ENCODE measurements at regions of chr4 and their contacts with region 1.

Region 1: DNA sequence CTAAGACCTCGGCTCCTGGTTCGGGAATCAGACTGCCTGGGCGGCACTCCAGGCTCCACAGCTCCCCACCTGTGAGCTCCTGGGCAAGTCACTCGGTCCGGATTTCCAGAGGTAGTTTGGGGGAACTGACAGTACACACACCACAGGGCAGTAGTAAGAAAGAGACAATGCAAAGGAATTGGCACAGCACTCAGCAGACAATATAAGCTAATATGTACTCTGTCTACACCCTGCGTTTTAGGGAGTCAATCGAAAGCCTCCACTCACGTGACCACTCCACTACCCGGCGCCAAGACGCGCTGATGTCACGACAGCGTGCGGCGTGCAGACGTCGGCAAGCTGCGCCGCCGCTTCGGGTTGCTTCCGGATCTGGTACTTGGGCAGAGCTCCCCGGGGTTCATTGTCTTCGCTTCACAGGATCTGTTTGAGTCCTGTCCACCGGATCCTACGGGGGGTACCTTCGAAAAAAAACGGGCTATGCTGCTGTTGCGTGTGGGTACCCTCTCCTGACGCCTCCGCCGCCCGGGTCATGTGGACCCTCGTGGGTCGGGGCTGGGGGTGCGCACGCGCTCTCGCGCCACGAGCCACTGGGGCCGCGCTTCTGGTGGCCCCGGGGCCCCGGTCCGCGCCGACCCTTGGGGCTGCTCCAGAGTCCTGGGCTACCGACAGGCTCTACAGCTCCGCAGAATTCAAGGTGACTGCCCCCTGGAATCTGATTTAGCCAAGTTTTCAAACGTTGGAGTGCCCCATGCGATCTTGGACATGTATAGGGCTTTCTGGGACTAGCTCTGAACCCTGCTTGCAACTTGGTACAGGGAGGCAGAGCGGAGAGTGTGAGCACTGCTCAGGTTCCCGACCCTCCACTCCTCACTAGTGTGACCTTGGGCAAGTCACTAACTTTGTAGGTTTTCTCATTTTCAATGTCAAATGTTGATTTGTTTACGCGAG is at the start of gene GUF1:
- DNase-seq: peak; percentile 60 to 88
- H3K4me3 ChIP-seq: peak within 1 kb of the TSS; percentile 90 to 97 (median 94)
- H3K27ac ChIP-seq: peak within 1 kb of the TSS; percentile 92
- H3K4me1 ChIP-seq: no peaks in the 10 kb centered on the region; a peak in 1 of 7 replicates
- H3K27me3 ChIP-seq: peaks cover 0 to 1% (median 0%) of the 10 kb centered on the region in 4 experiments; a peak in 1 of 7 replicates
- CTCF ChIP-seq: no peak
- EP300 ChIP-seq: no peak
- POLR2A ChIP-seq: peak; percentile 77 to 95
- RAD21 ChIP-seq: no peak
- total RNA-seq, gene GUF1: 29.9 and 30.6 TPM in 2 replicates

Region 2: GRCh38 chr4:44256414-44256813 is 422.0 kb before region 1 on chr4:
- CTCF ChIA-PET with region 1: no interaction called
- POLR2A ChIA-PET with region 1: no interaction called
- DNase-seq: peak in 1 of 2 experiments; percentile 9
- H3K4me3 ChIP-seq: no peak overlapping the region
- H3K27ac ChIP-seq: no peak overlapping the region
- H3K4me1 ChIP-seq: no peaks in the 10 kb centered on the region
- H3K27me3 ChIP-seq: no peaks in the 10 kb centered on the region
- CTCF ChIP-seq: peak in 1 of 3 experiments; percentile 18; a peak in 1 of 4 replicates
- EP300 ChIP-seq: no peak
- POLR2A ChIP-seq: no peak
- RAD21 ChIP-seq: peak; percentile 53 to 56

Region 3: GRCh38 chr4:44326741-44327140 is 351.6 kb before region 1 on chr4:
- CTCF ChIA-PET with region 1: no interaction called
- POLR2A ChIA-PET with region 1: no interaction called
- DNase-seq: no peak
- H3K4me3 ChIP-seq: no peak overlapping the region
- H3K27ac ChIP-seq: no peak overlapping the region
- H3K4me1 ChIP-seq: peaks cover 0 to 4% (median 0%) of the 10 kb centered on the region in 4 experiments; a peak in 1 of 7 replicates
- H3K27me3 ChIP-seq: no peaks in the 10 kb centered on the region
- CTCF ChIP-seq: no peak
- EP300 ChIP-seq: no peak
- POLR2A ChIP-seq: no peak
- RAD21 ChIP-seq: no peak

Region 4: GRCh38 chr4:44663539-44664263 is 14.7 kb before region 1 on chr4:
- CTCF ChIA-PET with region 1: interaction called, 3 read pairs
- POLR2A ChIA-PET with region 1: interaction called, 15 read pairs
- DNase-seq: no peak
- H3K4me3 ChIP-seq: no peak overlapping the region
- H3K27ac ChIP-seq: no peak overlapping the region
- H3K4me1 ChIP-seq: peaks cover 0 to 6% (median 0%) of the 10 kb centered on the region in 4 experiments; a peak in 2 of 7 replicates
- H3K27me3 ChIP-seq: no peaks in the 10 kb centered on the region
- CTCF ChIP-seq: no peak
- EP300 ChIP-seq: no peak
- POLR2A ChIP-seq: no peak
- RAD21 ChIP-seq: no peak

Measured in H1 (cell line).